ENCODE measurements at regions of chr10 and their contacts with region 1.

Region 1: DNA sequence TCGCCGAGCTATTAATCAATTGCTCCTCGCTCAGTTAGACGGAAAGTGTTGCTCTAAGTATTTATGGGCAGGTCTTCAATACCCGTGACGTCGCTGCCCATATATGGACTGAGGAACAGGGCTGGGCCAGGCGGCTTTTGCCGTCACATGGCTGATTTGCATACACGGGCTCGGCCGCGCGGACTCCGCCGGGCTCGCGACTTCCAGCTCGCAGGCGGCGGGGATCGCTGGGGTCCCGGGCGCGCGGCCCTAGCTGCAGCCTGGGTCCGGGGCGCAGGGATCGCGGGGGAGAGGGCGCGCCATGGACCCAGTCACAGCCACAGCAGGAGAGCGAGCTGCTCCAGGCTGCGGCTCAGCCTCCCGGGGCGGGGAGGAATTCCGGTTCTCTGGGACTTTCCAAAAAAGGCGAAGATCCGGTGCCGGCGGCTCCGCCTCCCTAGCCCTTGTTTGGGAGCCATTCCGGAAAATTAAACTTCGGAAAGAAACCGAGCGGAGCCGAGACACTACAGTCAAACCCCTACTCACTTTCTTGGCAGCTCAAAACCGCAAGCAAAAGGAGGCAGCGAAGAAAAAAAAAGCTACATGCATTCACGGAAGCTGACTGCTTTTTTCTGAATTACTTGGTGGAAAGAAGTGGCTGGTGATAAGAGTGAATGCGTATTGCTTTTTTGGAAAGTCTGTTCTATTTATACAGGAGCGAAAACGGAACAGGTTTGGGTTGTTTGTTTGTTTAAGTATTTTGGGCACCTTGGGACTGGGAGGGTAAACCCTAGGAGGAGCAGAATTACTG is at the start of gene EGR2:
- DNase-seq: peak; percentile 93
- H3K4me3 Mint-ChIP-seq: peak within 1 kb of the TSS; percentile 95
- H3K27ac Mint-ChIP-seq: peak within 1 kb of the TSS; percentile 95
- H3K4me1 Mint-ChIP-seq: peaks cover 24% of the 10 kb centered on the region
- H3K27me3 Mint-ChIP-seq: no peaks in the 10 kb centered on the region
- CTCF ChIP-seq: no peak
- total RNA-seq, gene EGR2: 0.25 and 1.0 TPM in 2 replicates

Region 2: GRCh38 chr10:62554632-62555199 is 261.8 kb before region 1 on chr10:
- CTCF ChIA-PET with region 1: no interaction called
- POLR2A ChIA-PET with region 1: no interaction called
- intact Hi-C with region 1: no loop called
- DNase-seq: peak; percentile 53
- H3K4me3 Mint-ChIP-seq: no peak overlapping the region
- H3K27ac Mint-ChIP-seq: no peak overlapping the region
- H3K4me1 Mint-ChIP-seq: no peaks in the 10 kb centered on the region
- H3K27me3 Mint-ChIP-seq: peaks cover 11% of the 10 kb centered on the region
- CTCF ChIP-seq: peak; percentile 35

Region 3: GRCh38 chr10:62594093-62594520 is 222.4 kb before region 1 on chr10:
- CTCF ChIA-PET with region 1: interaction called, 9 read pairs
- POLR2A ChIA-PET with region 1: no interaction called
- intact Hi-C with region 1: loop called (anchors 1 kb)
- DNase-seq: peak; percentile 64
- H3K4me3 Mint-ChIP-seq: no peak overlapping the region
- H3K27ac Mint-ChIP-seq: no peak overlapping the region
- H3K4me1 Mint-ChIP-seq: peaks cover 6% of the 10 kb centered on the region
- H3K27me3 Mint-ChIP-seq: no peaks in the 10 kb centered on the region
- CTCF ChIP-seq: peak; percentile 87

Region 4: DNA sequence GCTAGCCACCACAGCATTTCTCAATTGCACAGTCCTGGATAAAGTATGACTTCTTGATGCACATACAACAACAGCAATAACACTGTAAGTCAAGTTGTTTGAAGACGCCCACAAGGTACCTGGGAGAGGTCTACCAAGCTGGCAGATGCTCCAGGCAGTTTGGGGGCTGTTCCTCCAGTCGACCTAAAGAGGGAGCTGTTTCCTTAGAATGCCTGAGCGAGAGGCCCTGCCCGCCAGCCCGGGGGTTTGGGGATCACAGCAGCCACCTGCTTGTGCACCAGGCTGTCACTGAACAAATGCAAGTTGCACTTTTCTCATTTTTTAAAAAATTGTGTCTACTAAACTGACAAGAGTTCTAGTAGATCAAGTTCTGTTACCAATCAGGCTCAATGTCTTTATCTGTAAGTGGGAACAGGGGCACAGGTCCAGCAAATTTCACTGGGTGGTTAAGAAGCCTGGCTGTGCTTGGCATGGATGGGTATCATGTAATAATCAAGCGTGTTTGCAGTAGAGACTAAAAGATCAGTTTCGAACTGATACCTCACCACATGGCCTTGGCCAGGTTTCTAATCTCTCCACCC is 205.8 kb before region 1 on chr10:
- CTCF ChIA-PET with region 1: interaction called, 23 read pairs
- POLR2A ChIA-PET with region 1: interaction called, 8 read pairs
- intact Hi-C with region 1: loop called (anchors 1 kb)
- DNase-seq: peak; percentile 75
- H3K4me3 Mint-ChIP-seq: no peak overlapping the region
- H3K27ac Mint-ChIP-seq: no peak overlapping the region
- H3K4me1 Mint-ChIP-seq: peaks cover 5% of the 10 kb centered on the region
- H3K27me3 Mint-ChIP-seq: no peaks in the 10 kb centered on the region
- CTCF ChIP-seq: peak; percentile 87

Region 5: GRCh38 chr10:62779487-62780248 is 36.9 kb before region 1 on chr10:
- CTCF ChIA-PET with region 1: no interaction called
- POLR2A ChIA-PET with region 1: no interaction called
- intact Hi-C with region 1: no loop called
- DNase-seq: peak; percentile 54
- H3K4me3 Mint-ChIP-seq: no peak overlapping the region
- H3K27ac Mint-ChIP-seq: no peak overlapping the region
- H3K4me1 Mint-ChIP-seq: peaks cover 7% of the 10 kb centered on the region
- H3K27me3 Mint-ChIP-seq: peaks cover 10% of the 10 kb centered on the region
- CTCF ChIP-seq: no peak

Region 6: DNA sequence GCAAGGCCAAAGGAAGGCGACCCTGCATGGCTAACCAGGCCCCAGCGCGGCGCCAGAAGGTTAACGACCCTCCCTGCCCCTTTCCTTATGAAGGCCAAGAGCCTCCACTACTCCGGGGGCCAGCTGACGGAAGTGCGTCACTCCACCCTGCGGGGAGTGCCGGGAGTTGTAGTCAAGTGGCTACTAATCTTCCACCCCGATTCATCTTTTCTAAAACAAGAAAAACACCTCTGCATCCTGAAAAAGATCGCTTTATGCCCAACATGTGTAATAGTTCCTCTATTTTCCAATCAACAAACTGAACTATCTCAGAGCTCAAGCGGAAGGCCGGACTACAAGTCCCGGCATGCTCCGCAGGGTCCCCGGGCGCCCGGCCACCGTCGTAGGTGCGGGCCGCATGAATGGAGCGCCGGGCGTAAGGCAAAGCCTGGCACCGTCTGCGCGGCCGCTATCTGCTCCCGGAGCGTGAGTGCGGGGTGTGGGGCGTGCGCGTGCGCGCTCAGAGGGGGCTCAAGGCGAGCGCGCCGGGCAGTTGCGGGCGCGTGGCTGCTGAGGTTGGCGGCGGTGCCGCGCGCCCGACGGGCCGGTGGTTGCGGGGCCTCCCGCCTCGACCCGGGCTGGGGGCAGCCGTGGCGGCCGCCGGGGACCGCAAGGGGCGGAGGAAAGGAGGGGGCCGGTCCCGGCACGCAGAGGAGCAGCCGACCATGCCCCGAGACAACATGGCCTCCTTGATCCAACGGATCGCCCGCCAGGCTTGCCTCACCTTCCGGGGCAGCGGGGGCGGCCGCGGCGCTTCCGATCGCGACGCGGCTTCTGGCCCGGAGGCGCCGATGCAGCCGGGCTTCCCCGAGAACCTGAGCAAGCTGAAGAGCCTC is 11.9 kb before region 1 on chr10 and contains the start of gene ADO:
- CTCF ChIA-PET with region 1: interaction called, 24 read pairs
- POLR2A ChIA-PET with region 1: interaction called, 94 read pairs
- intact Hi-C with region 1: loop called (anchors 1 kb)
- DNase-seq: peak; percentile 77
- H3K4me3 Mint-ChIP-seq: peak within 1 kb of the TSS; percentile 91
- H3K27ac Mint-ChIP-seq: peak within 1 kb of the TSS; percentile 98
- H3K4me1 Mint-ChIP-seq: peaks cover 22% of the 10 kb centered on the region
- H3K27me3 Mint-ChIP-seq: peaks cover 11% of the 10 kb centered on the region
- CTCF ChIP-seq: no peak
- total RNA-seq, gene ADO: 22.1 and 24.3 TPM in 2 replicates

Region 7: GRCh38 chr10:62839590-62839989 is 23.1 kb after region 1 on chr10:
- CTCF ChIA-PET with region 1: no interaction called
- POLR2A ChIA-PET with region 1: no interaction called
- intact Hi-C with region 1: no loop called
- DNase-seq: no peak
- H3K4me3 Mint-ChIP-seq: no peak overlapping the region
- H3K27ac Mint-ChIP-seq: no peak overlapping the region
- H3K4me1 Mint-ChIP-seq: no peaks in the 10 kb centered on the region
- H3K27me3 Mint-ChIP-seq: peaks cover 30% of the 10 kb centered on the region
- CTCF ChIP-seq: no peak

Region 8: GRCh38 chr10:62916141-62916603 is 99.6 kb after region 1 on chr10:
- CTCF ChIA-PET with region 1: no interaction called
- POLR2A ChIA-PET with region 1: no interaction called
- intact Hi-C with region 1: loop called (anchors 2 kb)
- DNase-seq: peak; percentile 92
- H3K4me3 Mint-ChIP-seq: no peak overlapping the region
- H3K27ac Mint-ChIP-seq: peak overlapping the region; percentile 29
- H3K4me1 Mint-ChIP-seq: peaks cover 20% of the 10 kb centered on the region
- H3K27me3 Mint-ChIP-seq: no peaks in the 10 kb centered on the region
- CTCF ChIP-seq: no peak

Region 9: GRCh38 chr10:62961951-62962523 is 145.5 kb after region 1 on chr10:
- CTCF ChIA-PET with region 1: no interaction called
- POLR2A ChIA-PET with region 1: no interaction called
- intact Hi-C with region 1: no loop called
- DNase-seq: no peak
- H3K4me3 Mint-ChIP-seq: no peak overlapping the region
- H3K27ac Mint-ChIP-seq: no peak overlapping the region
- H3K4me1 Mint-ChIP-seq: no peaks in the 10 kb centered on the region
- H3K27me3 Mint-ChIP-seq: peaks cover 11% of the 10 kb centered on the region
- CTCF ChIP-seq: no peak

Region 10: DNA sequence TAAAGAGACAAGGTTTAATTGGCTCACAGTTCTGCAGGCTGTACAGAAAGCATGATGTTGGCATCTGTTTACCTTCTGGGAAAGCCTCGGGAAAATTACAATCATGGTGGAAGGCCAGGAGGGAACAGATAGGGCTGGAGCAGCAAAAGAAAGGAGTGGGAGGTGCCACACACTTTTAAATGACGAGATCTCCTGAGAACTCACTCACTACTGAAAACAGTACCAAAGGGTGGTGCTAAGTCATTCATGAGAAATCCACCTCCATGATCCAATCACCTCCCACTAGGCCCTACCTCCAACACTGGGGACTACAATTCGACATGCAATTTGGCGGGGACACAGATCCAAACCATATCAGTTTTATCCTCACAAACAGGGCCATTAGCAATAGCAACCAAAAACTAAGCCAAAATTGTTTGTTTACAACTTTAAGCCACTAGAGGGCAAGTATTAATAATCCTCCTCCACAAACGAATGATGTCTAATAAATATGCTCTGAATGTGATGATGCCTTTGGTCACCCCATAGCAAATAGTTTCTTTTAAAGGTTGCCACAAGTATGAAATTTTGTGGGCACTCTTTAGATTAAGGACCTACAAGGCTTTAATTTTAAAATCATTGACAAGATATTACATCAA is 187.4 kb after region 1 on chr10:
- CTCF ChIA-PET with region 1: no interaction called
- POLR2A ChIA-PET with region 1: no interaction called
- intact Hi-C with region 1: loop called (anchors 2 kb)
- DNase-seq: peak; percentile 18
- H3K4me3 Mint-ChIP-seq: no peak overlapping the region
- H3K27ac Mint-ChIP-seq: no peak overlapping the region
- H3K4me1 Mint-ChIP-seq: peaks cover 18% of the 10 kb centered on the region
- H3K27me3 Mint-ChIP-seq: no peaks in the 10 kb centered on the region
- CTCF ChIP-seq: no peak